ENCODE measurements at regions of chr6 and their contacts with region 1.

Region 1: DNA sequence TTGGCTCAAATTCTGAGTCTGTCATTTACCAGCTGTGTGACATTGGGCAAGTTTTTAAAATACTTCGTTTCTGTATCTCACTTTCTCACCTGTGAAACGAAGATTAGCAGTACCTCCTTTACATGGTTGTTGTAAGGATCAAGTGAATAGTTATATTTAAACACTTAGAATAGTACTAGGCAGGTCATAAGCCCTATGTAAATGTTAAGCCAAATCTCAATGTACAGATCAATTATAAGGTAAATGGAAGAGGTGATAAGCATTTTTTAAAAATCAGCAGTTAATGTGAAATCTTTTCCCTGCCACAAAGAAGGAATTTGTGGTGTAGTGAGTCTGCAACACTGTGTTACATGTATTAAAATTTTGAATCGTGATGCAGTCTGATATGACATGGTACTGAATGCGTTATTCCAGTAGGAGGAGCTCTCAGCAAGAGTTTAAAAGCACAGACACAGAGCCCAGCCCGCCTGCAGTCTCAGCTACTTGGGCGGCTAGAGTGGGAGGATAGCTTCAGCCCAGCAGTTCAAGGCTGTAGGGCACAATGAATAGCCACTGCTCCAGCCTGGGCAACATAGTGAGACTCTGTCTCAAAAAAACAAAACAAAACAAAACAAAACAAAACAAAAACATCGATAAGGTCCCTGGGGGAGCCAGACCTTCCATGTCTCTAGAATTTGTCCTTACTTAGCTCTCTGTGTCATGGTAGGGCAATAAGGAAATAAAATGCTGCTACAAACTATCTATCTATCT is 46.0 kb downstream of the GTF2H5 start:
- DNase-seq: peak; percentile 63 to 74 (median 72)
- ATAC-seq: peak; percentile 91
- H3K4me3 ChIP-seq: no peak overlapping the region
- H3K27ac ChIP-seq: no peak overlapping the region
- H3K4me1 ChIP-seq: no peaks in the 10 kb centered on the region
- H3K27me3 ChIP-seq: no peaks in the 10 kb centered on the region
- CTCF ChIP-seq: peak; percentile 42 to 78 (median 73)
- POLR2A ChIP-seq: no peak

Region 2: GRCh38 chr6:158686791-158687381 is 472.8 kb after region 1 on chr6:
- intact Hi-C with region 1: loop called (anchors 10 kb)
- DNase-seq: no peak
- ATAC-seq: no peak
- H3K4me3 ChIP-seq: no peak overlapping the region
- H3K27ac ChIP-seq: no peak overlapping the region
- H3K4me1 ChIP-seq: no peaks in the 10 kb centered on the region
- H3K27me3 ChIP-seq: no peaks in the 10 kb centered on the region
- CTCF ChIP-seq: no peak
- POLR2A ChIP-seq: no peak